Heart right ventricle (tissue), 16 donors: ENCODE measurements at regions of chr1 and their contacts with region 1.

Region 1: DNA sequence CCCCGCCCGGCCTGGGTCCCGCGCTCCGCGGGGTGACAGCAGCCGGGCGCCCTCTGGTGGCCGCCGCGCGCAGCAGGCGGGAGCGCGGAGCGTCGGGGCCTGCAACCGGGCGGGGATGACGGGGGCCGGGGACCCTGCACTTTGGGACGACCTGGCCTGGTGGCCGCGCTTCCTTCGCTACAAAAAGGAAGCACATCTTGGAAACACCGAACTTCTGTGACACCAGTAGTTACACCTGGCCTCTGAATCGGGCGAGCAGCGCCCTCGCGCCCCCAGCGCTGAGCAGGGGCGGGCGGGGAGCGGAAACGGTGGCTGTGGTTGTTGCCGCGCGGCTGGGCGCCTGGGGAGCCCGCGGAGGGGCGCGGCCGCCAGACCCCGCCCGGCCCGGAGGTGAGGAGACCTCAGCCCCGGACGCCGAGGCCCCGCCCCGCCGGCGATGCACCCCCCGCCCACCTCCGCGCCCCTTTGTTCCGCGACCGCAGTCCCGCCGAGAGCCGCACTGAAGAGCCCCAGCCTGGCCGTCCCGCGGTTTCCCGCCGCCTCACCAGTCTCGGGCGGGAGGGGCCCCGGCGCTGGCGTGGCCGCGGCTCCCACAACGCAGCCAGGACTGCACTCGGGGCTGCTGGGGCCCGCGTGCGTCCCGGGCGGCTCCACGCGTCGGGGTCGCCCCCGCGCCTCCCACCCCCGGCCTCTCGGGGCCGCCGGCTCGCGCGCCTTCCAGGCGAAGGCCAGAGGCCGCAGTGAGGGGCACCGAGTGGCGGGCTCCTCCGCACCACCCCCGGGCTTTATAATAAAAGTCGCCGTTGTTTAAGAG is 59.3 kb downstream of the H3-3A start:
- DNase-seq: peak; percentile 58 to 75
- ATAC-seq: peak; percentile 73 to 91 (median 84)
- H3K4me3 ChIP-seq: peak overlapping the region; percentile 36 to 83 (median 66)
- H3K27ac ChIP-seq: peak overlapping the region; percentile 52 to 86 (median 72)
- H3K4me1 ChIP-seq: peaks cover 3 to 16% (median 13%) of the 10 kb centered on the region in 9 donors
- H3K27me3 ChIP-seq: peaks cover 0 to 11% (median 0%) of the 10 kb centered on the region in 7 donors
- CTCF ChIP-seq: peak; percentile 65 to 98 (median 85)

Region 2: DNA sequence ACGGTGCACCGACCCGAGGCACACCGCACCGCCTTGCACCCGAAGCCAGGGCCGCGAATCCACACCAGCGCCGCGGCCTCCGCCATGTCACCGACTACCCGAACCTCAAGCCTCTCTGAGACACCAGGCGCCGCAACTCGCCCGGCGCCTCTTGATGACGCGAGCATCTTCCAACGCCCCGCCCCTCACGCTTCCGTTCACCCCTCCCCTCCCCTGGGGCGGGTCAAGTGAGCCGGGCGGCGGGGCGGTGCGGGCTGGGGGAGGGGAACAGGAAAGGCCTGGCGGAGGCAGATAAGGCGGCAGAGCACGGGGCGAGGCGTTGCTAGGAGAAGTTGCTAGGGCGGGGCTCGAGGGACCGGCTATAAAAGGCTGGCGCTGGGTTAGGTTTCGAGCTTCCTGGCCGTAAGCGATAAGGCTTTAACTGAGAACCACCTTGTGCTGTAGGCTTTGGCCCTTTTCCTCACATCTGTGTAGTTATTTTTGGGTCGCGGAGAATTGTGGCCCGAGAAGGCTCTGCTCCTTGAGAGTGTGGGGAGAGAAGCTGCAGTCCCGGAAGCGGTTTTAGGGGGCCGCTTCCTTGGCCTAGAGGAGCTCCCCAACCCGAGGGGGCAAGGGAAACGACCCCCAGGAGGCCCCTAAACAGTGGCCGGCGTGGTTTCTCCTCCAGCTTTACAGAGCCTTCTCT is 122.4 kb before region 1 on chr1 and contains the start of gene SDE2:
- intact Hi-C with region 1: loop called in 5 of 10 experiments (anchors 5 kb)
- DNase-seq: peak; percentile 100
- ATAC-seq: peak; percentile 95 to 99 (median 97)
- H3K4me3 ChIP-seq: peak within 1 kb of the TSS; percentile 62 to 94 (median 76)
- H3K27ac ChIP-seq: peak within 1 kb of the TSS; percentile 91 to 100 (median 96)
- H3K4me1 ChIP-seq: peaks cover 13 to 73% (median 61%) of the 10 kb centered on the region in 9 donors
- H3K27me3 ChIP-seq: no peaks in the 10 kb centered on the region
- CTCF ChIP-seq: peak in 2 of 9 donors; percentile 15 to 26
- total RNA-seq, gene SDE2: 10.3 to 20.3 (median 13.9) TPM

Region 3: GRCh38 chr1:226062558-226063223 is 59.1 kb before region 1 on chr1 and contains the start of gene H3-3A:
- intact Hi-C with region 1: loop called in 9 of 10 experiments (anchors 1 to 5 kb)
- DNase-seq: peak; percentile 99
- ATAC-seq: peak; percentile 92 to 95 (median 94)
- H3K4me3 ChIP-seq: peak within 1 kb of the TSS; percentile 69 to 93 (median 87)
- H3K27ac ChIP-seq: peak within 1 kb of the TSS; percentile 91 to 100 (median 99)
- H3K4me1 ChIP-seq: peaks cover 6 to 51% (median 47%) of the 10 kb centered on the region in 9 donors
- H3K27me3 ChIP-seq: no peaks in the 10 kb centered on the region
- CTCF ChIP-seq: peak in 5 of 9 donors; percentile 2 to 35 (median 17)
- total RNA-seq, gene H3-3A: 259 to 374 (median 304) TPM

Region 4: DNA sequence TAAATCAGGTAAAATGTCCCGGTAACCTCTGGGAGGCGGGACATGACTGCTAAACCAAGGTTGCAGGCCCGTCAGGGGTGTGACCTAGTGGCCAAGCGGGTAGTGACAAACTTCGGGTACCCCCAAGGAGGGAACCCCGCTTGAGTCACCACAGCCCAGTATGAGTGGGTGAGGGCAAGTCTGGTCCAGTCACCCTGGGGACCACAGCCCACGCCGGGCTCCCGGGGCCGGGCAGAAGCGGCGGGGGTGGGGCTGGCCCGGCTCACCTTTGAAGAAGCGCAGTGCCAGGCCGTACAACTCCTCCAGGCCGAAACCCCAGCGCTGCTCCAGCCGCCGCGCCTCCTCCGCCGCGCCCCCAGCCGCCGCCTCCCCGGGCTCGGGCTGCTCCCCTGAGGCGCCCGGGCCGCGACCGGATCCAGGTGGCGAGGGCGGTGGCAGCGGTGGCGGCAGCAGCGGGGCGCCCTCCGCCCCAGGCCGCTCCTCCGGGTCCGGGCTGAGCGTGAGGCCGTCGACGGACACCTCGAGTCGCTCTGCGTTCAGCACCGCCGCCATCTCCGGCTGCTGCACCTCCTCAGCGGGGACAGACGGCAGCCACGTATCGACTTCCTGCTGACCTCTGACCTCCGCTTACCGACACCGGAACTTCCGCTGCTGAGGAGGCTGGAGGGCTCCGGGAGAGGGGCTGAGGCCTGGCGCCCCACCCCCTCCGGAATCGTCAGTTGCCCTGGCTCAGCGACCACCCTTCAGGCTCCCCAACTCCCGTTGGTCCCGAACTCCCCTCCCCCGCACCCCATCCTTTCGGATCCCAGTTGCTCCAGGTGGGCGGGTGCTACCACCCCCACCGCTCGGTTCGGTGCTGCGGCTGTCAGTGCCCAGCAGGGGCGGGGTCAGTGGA is 64.6 kb after region 1 on chr1 and contains the start of gene ACBD3:
- intact Hi-C with region 1: loop called in 1 of 10 experiments (anchors 5 kb)
- DNase-seq: peak; percentile 85 to 92
- ATAC-seq: peak; percentile 97 to 98 (median 98)
- H3K4me3 ChIP-seq: peak within 1 kb of the TSS; percentile 70 to 99 (median 90)
- H3K27ac ChIP-seq: peak within 1 kb of the TSS; percentile 88 to 96 (median 94)
- H3K4me1 ChIP-seq: peaks cover 9 to 51% (median 47%) of the 10 kb centered on the region in 9 donors
- H3K27me3 ChIP-seq: no peaks in the 10 kb centered on the region
- CTCF ChIP-seq: peak in 2 of 9 donors; percentile 10 to 38
- total RNA-seq, gene ACBD3: 25.3 to 39.1 (median 34.3) TPM

Region 5: GRCh38 chr1:226201029-226201593 is 79.3 kb after region 1 on chr1:
- intact Hi-C with region 1: loop called (anchors 1 to 5 kb)
- DNase-seq: no peak
- ATAC-seq: no peak
- H3K4me3 ChIP-seq: no peak overlapping the region
- H3K27ac ChIP-seq: no peak overlapping the region
- H3K4me1 ChIP-seq: peaks cover 0 to 4% (median 0%) of the 10 kb centered on the region in 9 donors
- H3K27me3 ChIP-seq: peaks cover 0 to 21% (median 0%) of the 10 kb centered on the region in 7 donors
- CTCF ChIP-seq: peak in 2 of 9 donors; percentile 15 to 34